IMR-90 (cell line): ENCODE measurements at regions of chr2 and their contacts with region 1.

Region 1: GRCh38 chr2:215949991-215950404 is 63.4 kb downstream of the MREG start:
- DNase-seq: peak; percentile 67
- ATAC-seq: peak; percentile 84
- H3K4me3 ChIP-seq: no peak overlapping the region
- H3K27ac ChIP-seq: no peak overlapping the region
- H3K4me1 ChIP-seq: no peaks in the 10 kb centered on the region
- H3K27me3 ChIP-seq: no peaks in the 10 kb centered on the region
- CTCF ChIP-seq: peak; percentile 59
- POLR2A ChIP-seq: no peak
- RAD21 ChIP-seq: peak; percentile 53

Region 2: GRCh38 chr2:216013080-216013909 is 63.3 kb after region 1 on chr2 and contains the start of gene MREG:
- CTCF ChIA-PET with region 1: interaction called, 12 read pairs
- POLR2A ChIA-PET with region 1: no interaction called
- dilution Hi-C with region 1: no loop called
- in situ Hi-C with region 1: no loop called
- intact Hi-C with region 1: no loop called
- DNase-seq: peak; percentile 61
- ATAC-seq: peak; percentile 96
- H3K4me3 ChIP-seq: peak within 1 kb of the TSS; percentile 89
- H3K27ac ChIP-seq: no peak within 1 kb of the TSS; the same call in 1 of the 2 replicates
- H3K4me1 ChIP-seq: peaks cover 2% of the 10 kb centered on the region; the same call in 1 of the 2 replicates
- H3K27me3 ChIP-seq: no peaks in the 10 kb centered on the region
- CTCF ChIP-seq: peak; percentile 70
- POLR2A ChIP-seq: no peak
- RAD21 ChIP-seq: peak; percentile 18; the same call in 1 of the 2 replicates
- total RNA-seq, gene MREG: 1.7 and 1.8 TPM in 2 replicates

Region 3: DNA sequence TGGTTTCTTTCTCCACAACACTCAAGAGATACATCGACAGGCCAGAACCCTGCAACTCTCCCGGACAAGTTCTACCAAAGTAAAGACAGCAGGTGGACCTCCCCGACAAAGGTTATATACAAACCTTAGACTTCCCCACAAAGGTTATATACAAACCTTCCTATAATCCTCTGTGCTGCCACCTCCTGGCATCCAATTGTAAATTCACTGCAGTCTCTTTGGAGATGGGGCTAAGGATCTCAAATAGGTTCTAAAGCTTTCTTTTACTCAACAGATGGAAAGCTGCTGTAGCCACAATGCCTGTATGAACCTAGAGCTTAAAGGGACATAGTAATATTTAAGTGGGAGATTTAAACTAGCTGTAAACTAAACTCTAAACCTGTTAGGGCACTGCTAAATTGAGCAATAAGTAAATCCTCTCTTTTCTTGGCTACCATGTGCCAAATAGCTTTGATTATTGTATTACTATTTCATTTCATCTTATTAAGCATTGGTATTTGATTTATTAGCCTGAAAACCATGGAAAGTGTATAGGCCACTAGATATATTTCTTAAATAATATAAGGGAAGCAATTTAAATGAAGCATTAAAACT is 73.2 kb after region 1 on chr2:
- CTCF ChIA-PET with region 1: no interaction called
- POLR2A ChIA-PET with region 1: no interaction called
- dilution Hi-C with region 1: no loop called
- in situ Hi-C with region 1: no loop called
- intact Hi-C with region 1: loop called (anchors 2 kb)
- DNase-seq: peak; percentile 52
- ATAC-seq: peak; percentile 89
- H3K4me3 ChIP-seq: no peak overlapping the region
- H3K27ac ChIP-seq: no peak overlapping the region
- H3K4me1 ChIP-seq: no peaks in the 10 kb centered on the region
- H3K27me3 ChIP-seq: no peaks in the 10 kb centered on the region
- CTCF ChIP-seq: peak; percentile 66
- POLR2A ChIP-seq: no peak
- RAD21 ChIP-seq: peak; percentile 52